ACHN (cell line): ENCODE measurements at regions of chr9 and their contacts with region 1.

Region 1: DNA sequence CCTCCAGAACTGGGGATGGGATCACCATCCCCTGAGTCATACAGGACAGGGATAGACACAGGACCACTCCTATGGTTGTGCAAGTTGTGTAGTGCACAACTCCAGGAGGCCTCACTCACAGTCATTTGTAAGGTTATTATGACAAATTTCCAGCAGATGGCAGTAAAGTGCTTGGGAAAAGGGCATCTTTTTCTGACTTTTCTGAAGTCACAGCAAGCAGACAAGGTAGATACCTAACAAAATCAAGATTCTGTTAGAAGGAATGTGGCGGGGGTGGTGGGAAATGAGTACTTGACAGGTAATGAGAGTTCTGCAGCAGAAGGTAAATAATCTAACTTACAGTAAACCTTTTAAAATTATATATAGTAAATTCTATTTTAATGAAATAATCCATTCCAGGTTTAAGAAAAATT is 16.7 kb upstream of the KIF27 start:
- DNase-seq: peak; percentile 75

Region 2: GRCh38 chr9:83027153-83027891 is 910.6 kb before region 1 on chr9:
- in situ Hi-C with region 1: loop called (anchors 25 kb)
- DNase-seq: peak; percentile 88

Region 3: GRCh38 chr9:84261082-84261746 is 323.3 kb after region 1 on chr9:
- in situ Hi-C with region 1: loop called (anchors 25 kb)
- DNase-seq: peak; percentile 73